ENCODE measurements at regions of chr19 and their contacts with region 1.

Region 1: DNA sequence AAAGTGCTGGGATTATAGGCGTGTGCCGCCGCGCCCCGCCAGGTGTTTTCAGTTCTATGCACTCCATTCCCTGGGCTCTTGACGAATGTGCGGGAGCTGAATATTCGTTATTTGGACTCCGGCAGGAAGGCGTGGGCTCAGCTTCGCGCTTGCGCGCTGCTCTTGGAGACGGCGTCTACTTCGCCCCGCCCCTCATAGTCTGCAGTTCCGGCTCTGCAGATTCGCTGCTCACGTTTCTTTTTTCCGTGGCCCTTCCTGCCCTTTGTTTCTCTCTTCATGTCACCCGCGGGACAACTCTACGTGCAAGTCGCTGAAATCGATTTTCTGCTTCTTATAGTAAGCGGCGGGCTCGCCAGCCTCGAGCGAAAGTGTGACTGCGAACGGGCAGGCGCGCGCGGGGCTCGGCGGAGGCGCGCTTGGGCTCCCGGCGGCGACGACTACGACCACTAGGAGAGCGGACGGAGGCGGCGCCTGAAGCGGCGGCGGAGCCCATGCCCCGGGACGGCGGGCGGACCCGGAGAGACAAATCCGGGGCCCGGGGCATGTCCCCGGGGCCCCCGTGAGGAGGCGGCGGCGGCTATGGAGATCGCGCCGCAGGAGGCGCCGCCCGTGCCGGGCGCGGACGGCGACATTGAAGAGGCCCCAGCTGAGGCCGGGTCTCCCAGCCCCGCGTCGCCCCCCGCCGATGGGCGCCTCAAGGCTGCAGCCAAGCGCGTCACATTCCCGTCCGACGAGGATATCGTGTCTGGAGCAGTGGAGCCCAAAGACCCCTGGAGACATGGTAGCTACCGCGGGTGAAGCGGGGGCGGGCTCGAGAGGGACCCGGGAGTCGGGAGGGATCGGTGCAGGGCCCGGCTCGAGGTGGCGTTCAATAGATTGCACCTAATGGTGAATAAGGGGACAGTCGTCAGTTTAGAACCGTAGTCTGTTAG is at the start of gene PPP1R37:
- DNase-seq: peak; percentile 97
- H3K4me3 ChIP-seq: peak within 1 kb of the TSS; percentile 89 to 97 (median 95)
- H3K27ac ChIP-seq: peak within 1 kb of the TSS; percentile 94
- H3K4me1 ChIP-seq: peaks cover 31% of the 10 kb centered on the region
- H3K27me3 ChIP-seq: no peaks in the 10 kb centered on the region
- CTCF ChIP-seq: peak in 1 of 2 donors; percentile 31
- total RNA-seq, gene PPP1R37: 32.9 to 48.0 TPM

Region 2: GRCh38 chr19:45125926-45126493 is 33.0 kb after region 1 on chr19:
- CTCF ChIA-PET with region 1: no interaction called
- dilution Hi-C with region 1: no loop called
- in situ Hi-C with region 1: no loop called
- intact Hi-C with region 1: loop called (anchors 2 kb)
- DNase-seq: peak; percentile 39
- H3K4me3 ChIP-seq: no peak overlapping the region
- H3K27ac ChIP-seq: no peak overlapping the region
- H3K4me1 ChIP-seq: peaks cover 20% of the 10 kb centered on the region
- H3K27me3 ChIP-seq: no peaks in the 10 kb centered on the region
- CTCF ChIP-seq: peak; percentile 79 to 88